ENCODE measurements at regions of chr3 and their contacts with region 1.

Region 1: GRCh38 chr3:45929042-45929679 is 14.1 kb upstream of the CXCR6 start:
- DNase-seq: peak; percentile 88
- CTCF ChIP-seq: peak; percentile 97

Region 2: DNA sequence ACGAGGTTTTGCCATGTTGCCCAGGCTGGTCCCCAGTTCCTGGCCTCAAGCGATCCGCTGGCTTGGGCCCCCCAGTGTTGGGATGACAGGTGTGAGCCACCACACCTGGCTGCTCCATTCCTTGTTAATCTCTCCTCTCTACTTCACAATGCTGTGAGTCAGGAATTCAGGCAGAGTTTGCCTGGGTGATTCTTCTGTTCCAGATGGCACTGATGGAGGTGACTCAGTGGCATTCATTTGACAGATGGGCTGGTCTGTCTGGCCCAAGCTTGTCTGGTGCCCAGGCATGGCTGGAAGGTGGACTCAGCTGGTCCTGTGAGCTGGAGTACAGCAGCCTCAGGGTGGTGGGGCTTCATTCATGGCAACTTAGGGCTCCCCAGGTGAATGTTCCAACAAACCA is 176.1 kb before region 1 on chr3:
- CTCF ChIA-PET with region 1: interaction called, 15 read pairs
- POLR2A ChIA-PET with region 1: no interaction called
- DNase-seq: no peak
- CTCF ChIP-seq: no peak

Region 3: GRCh38 chr3:45776611-45777010 is 152.6 kb before region 1 on chr3:
- CTCF ChIA-PET with region 1: interaction called, 12 read pairs
- POLR2A ChIA-PET with region 1: no interaction called
- DNase-seq: no peak
- CTCF ChIP-seq: no peak

Region 4: DNA sequence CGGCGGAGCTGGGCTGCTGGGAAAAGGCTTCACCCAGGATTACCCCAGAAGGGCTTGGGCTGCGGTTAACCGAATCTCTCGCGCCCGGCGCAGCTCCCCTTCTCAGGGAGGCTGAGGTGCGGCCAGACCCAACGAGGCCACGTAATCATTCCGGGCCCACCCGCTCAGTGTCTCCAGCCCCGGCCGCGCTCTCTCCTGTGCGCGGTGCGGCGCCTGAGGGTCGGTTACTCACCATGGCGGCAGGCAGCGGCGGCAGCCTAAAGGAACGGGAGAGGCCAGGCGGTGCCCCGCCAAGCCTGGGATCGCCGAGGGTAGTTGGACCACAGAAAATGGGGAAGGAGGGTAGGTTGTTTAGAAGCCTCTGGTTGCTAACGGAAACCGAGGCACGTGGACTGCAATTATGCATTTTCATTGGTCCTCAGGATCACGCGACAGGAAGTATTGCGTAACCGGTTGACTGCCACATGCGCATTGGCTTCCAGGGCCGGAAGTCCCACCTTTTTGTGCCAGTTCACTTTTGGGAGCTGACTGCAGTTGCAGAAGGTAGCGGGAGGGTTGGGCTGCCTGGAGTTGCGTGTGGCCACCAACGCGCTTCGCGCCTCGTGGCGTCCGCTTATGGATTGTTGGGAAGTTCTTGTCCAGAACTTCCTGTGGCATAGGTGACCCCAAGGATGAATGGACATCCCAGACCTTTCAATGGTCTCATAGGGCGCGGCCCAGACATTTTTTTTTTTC is 87.2 kb before region 1 on chr3 and contains the start of gene LZTFL1:
- CTCF ChIA-PET with region 1: interaction called, 21 read pairs
- POLR2A ChIA-PET with region 1: no interaction called
- DNase-seq: peak; percentile 93
- CTCF ChIP-seq: no peak

Region 5: GRCh38 chr3:45864760-45865519 is 64.2 kb before region 1 on chr3:
- CTCF ChIA-PET with region 1: interaction called, 10 read pairs
- POLR2A ChIA-PET with region 1: no interaction called
- DNase-seq: no peak
- CTCF ChIP-seq: no peak

Region 6: DNA sequence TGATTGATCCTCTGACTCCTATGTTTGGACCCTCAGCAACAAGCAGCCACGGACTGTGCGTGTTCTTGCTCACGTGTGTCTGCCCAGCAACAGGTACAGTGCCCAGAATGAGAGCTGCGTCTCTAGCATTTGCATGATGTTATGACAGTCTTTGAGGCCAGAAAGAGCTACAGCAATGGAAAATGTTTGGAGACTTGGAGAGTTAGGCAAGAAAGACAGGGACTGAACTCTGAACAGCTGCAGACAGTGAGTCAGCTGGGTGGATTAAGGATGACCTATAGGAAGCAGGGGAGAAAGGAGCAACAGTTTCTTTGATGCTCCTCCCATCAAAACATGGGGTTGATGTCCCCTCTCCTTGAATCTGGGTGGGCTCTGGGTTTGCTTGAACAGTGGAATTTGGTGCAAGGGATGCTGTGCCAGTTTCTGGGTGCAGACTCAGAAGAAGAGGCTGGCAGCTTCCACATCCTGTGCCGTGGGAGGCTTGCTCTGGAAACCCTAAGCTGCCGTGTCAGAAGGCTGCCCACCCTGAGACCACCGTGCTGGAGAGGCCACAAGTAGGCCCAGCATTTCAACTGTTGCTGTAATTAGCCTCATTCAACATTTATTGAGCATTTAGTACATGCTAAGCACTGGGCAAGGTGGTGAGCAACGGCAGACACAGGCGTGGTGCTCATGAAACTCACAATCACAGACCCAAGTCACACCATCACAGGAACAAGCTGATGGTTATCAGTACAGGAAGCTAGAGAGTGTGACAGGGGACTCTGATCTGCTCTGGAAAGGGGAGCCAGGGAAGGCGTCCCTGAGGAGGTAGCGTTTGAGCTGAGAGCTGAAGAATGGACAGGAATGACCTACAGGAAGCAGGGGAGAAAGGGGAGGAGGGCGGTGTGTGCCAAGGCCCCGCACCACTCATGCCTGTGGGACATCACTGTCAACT is 21.1 kb before region 1 on chr3:
- CTCF ChIA-PET with region 1: interaction called, 11 read pairs
- POLR2A ChIA-PET with region 1: interaction called, 7 read pairs
- DNase-seq: no peak
- CTCF ChIP-seq: no peak

Region 7: GRCh38 chr3:45958321-45958791 is 29.2 kb after region 1 on chr3:
- CTCF ChIA-PET with region 1: interaction called, 12 read pairs
- POLR2A ChIA-PET with region 1: no interaction called
- DNase-seq: no peak
- CTCF ChIP-seq: no peak

Measured in GM10248 (cell line).